ENCODE measurements at regions of chr2 and their contacts with region 1.

Region 1: GRCh38 chr2:96816128-96816835 is at the start of gene CNNM3:
- DNase-seq: peak; percentile 97
- ATAC-seq: peak; percentile 93
- H3K4me3 Mint-ChIP-seq: peak within 1 kb of the TSS; percentile 81
- H3K27ac Mint-ChIP-seq: peak within 1 kb of the TSS; percentile 56
- H3K4me1 Mint-ChIP-seq: peaks cover 46% of the 10 kb centered on the region
- H3K27me3 Mint-ChIP-seq: no peaks in the 10 kb centered on the region
- total RNA-seq, gene CNNM3: 19.2 to 31.2 TPM

Region 2: DNA sequence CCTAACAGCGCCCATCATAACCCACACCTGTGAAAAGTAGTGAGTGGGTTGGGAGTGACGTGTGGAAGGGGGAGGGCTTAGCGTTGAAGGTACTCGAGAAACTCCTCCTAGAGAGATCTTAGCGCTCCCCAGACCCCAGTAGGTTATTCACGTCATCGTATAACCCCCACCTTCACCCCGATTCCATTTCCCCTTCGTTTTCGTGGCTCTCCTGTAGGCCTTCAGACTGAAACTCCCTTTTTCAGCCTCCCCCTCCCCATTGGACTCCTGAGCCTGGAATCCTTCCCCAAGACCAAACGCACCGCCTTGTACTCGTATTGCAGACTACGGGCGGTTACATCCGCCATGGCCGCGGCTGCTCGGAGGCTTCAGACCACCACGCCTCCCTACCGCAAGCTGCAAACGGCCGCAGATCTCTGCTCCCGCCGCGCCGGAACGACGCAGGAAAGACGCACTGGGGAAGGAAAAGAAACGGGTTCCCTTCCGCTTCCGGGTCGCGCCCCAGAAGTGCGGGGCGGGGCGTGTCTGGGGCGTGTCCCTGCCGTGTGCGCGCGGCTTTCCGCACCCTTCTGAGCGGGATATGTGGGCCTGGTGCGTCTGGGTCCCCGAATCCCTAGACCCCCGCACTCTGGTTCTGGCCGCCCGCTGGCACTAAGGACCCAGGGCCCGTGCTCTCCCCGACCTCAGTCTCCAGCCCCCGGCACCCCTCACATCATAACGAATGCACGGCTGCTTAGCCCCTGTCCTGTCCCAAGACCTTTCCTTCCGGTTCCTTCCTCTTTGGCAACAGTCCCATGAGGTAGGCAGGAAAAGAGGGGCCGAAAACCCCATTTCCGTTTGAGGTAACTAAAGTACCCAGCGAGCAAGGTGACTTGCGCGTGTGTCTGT is 510.9 kb before region 1 on chr2 and contains the start of gene SNRNP200:
- CTCF ChIA-PET with region 1: no interaction called
- POLR2A ChIA-PET with region 1: no interaction called
- intact Hi-C with region 1: loop called in 1 of 2 experiments (anchors 1 kb)
- DNase-seq: peak; percentile 96
- ATAC-seq: peak; percentile 97
- H3K4me3 Mint-ChIP-seq: peak within 1 kb of the TSS; percentile 100
- H3K27ac Mint-ChIP-seq: peak within 1 kb of the TSS; percentile 99
- H3K4me1 Mint-ChIP-seq: peaks cover 46% of the 10 kb centered on the region
- H3K27me3 Mint-ChIP-seq: no peaks in the 10 kb centered on the region
- total RNA-seq, gene SNRNP200: 176 to 198 TPM

Region 3: DNA sequence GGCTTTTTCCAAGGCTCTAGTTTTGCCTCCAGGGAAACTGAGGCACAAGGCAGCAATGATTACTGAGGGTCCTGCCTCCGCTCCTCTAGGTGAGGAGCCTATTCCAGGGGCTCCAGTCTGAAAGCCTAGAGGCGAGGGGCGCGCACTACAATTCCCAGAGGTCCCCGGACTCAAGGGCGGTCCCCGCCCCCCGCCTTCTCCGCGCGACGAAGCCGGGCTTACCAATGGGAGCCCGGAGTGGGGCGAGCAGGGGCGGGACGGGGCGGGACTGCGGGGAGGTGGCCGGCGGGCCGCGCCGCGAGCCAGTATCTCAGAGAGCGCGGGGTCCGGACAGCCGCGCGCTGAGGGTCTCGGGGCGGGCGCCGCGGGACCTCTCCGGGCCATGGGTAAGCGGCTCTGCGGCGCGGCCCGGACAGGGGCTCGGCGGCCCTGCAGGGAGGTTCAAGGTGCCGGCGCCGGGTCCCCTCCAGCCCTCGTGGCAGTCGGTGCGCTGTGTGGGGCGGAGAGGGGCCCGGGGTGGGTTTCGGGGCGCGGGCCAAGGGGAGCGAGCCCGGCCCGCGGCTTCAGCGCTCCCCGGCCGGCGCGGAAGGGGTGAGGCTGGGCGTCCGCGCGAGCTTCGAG is 279.7 kb before region 1 on chr2 and contains the start of gene ARID5A:
- CTCF ChIA-PET with region 1: no interaction called
- POLR2A ChIA-PET with region 1: no interaction called
- intact Hi-C with region 1: loop called in 1 of 2 experiments (anchors 2 kb)
- DNase-seq: peak; percentile 97
- ATAC-seq: peak; percentile 66
- H3K4me3 Mint-ChIP-seq: peak within 1 kb of the TSS; percentile 97
- H3K27ac Mint-ChIP-seq: peak within 1 kb of the TSS; percentile 90
- H3K4me1 Mint-ChIP-seq: peaks cover 64% of the 10 kb centered on the region
- H3K27me3 Mint-ChIP-seq: no peaks in the 10 kb centered on the region
- total RNA-seq, gene ARID5A: 179 to 191 TPM

Region 4: GRCh38 chr2:96739633-96740428 is 76.5 kb before region 1 on chr2 and contains the start of gene LMAN2L:
- CTCF ChIA-PET with region 1: interaction called, 3 read pairs
- POLR2A ChIA-PET with region 1: no interaction called
- intact Hi-C with region 1: loop called in 1 of 2 experiments (anchors 1 kb)
- DNase-seq: peak; percentile 98
- ATAC-seq: peak; percentile 100
- H3K4me3 Mint-ChIP-seq: peak within 1 kb of the TSS; percentile 98
- H3K27ac Mint-ChIP-seq: peak within 1 kb of the TSS; percentile 84
- H3K4me1 Mint-ChIP-seq: peaks cover 40% of the 10 kb centered on the region
- H3K27me3 Mint-ChIP-seq: no peaks in the 10 kb centered on the region
- total RNA-seq, gene LMAN2L: 4.8 to 5.7 TPM

Region 5: GRCh38 chr2:96801005-96801785 is 15.1 kb before region 1 on chr2:
- CTCF ChIA-PET with region 1: interaction called, 6 read pairs
- POLR2A ChIA-PET with region 1: interaction called, 5 read pairs
- intact Hi-C with region 1: loop called in 1 of 2 experiments (anchors 2 kb)
- DNase-seq: peak; percentile 87
- ATAC-seq: peak; percentile 92
- H3K4me3 Mint-ChIP-seq: no peak overlapping the region
- H3K27ac Mint-ChIP-seq: no peak overlapping the region
- H3K4me1 Mint-ChIP-seq: peaks cover 2% of the 10 kb centered on the region
- H3K27me3 Mint-ChIP-seq: no peaks in the 10 kb centered on the region

Region 6: DNA sequence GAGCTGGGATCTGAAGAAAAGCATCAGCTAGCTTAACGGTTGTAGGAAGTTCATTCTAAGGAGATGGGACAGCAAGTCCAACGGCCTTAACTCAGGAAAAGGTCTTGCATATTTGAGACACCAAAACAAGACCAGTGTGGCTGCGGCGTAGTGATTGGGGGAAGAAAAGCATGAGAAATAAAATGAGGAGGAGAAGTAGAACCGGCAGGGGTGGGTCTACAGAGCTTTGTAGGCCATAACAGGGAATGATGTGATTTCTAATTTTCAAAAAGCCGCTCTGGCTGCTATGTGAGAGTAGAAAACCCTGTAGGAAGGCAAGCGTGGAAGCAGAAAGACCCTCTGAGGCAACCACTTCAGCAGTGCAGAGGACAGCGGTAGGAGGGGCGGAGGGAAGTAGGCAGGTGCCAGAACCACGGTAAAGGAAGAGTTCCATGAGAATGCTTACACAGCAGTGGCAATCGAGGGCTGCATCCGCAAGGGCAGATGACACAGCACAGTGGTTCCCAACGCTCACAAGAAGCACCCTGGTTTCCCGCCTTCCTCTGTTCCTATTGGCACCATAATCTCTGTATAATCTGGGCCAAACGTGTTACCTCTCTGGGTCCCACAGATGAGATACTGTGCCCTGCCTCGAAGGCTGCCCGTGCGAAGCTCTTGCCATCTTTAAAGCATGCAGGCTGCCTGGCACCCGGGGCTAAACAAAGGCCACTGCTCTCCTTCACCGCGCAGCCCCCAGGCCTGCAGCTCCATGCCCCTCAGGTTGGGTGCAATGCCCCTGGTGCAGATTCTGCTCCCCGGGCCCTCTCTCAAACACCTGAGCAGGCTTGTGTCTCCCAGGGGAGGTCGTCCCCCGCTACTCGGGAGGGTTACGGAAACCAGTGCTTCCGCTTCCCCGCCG is 40.7 kb after region 1 on chr2:
- CTCF ChIA-PET with region 1: interaction called, 5 read pairs
- POLR2A ChIA-PET with region 1: interaction called, 4 read pairs
- intact Hi-C with region 1: loop called (anchors 1 to 2 kb)
- DNase-seq: peak; percentile 66
- ATAC-seq: no peak
- H3K4me3 Mint-ChIP-seq: peak overlapping the region; percentile 90
- H3K27ac Mint-ChIP-seq: peak overlapping the region; percentile 79
- H3K4me1 Mint-ChIP-seq: peaks cover 36% of the 10 kb centered on the region
- H3K27me3 Mint-ChIP-seq: no peaks in the 10 kb centered on the region

Region 7: GRCh38 chr2:96951093-96951654 is 134.9 kb after region 1 on chr2:
- CTCF ChIA-PET with region 1: interaction called, 3 read pairs
- POLR2A ChIA-PET with region 1: no interaction called
- intact Hi-C with region 1: loop called in 1 of 2 experiments (anchors 5 kb)
- DNase-seq: peak; percentile 87
- ATAC-seq: peak; percentile 95
- H3K4me3 Mint-ChIP-seq: no peak overlapping the region
- H3K27ac Mint-ChIP-seq: no peak overlapping the region
- H3K4me1 Mint-ChIP-seq: peaks cover 23% of the 10 kb centered on the region
- H3K27me3 Mint-ChIP-seq: no peaks in the 10 kb centered on the region

Measured in activated CD4-positive, alpha-beta T cell treated with anti-CD3 and anti-CD28 coated beads for 36 hours (primary cell).